GM12878 (cell line): ENCODE measurements at regions of chr10 and their contacts with region 1.

Region 1: DNA sequence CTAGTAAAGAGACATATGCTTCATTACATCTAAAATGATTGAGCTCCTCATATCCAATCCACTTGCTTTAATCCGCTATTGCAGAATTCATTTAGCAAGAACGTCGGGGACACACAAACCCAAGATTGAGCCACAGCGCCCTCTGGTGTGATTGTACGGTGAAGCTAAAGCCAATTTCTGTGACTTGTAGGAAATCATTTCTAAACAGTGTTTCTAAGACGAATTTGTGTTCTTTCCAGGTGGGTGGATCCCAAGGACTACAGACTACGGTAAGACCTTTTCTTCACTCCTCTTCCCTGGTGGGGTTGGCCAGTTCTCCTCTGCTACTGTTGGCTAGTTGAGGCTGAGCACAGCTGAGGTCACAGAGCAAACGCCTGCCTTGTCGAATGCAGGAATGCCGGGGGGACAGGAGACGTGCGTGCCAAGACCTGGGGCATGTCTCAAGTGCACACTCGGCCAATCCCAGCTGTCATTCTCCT is 5.2 kb downstream of the DMBT1 start:
- DNase-seq: peak; percentile 1
- ATAC-seq: peak; percentile 58
- H3K4me3 ChIP-seq: no peak overlapping the region
- H3K27ac ChIP-seq: no peak overlapping the region
- H3K4me1 ChIP-seq: no peaks in the 10 kb centered on the region
- H3K27me3 ChIP-seq: no peaks in the 10 kb centered on the region; a peak in 2 of 4 replicates
- CTCF ChIP-seq: peak; percentile 65 to 77 (median 71)
- EP300 ChIP-seq: no peak
- POLR2A ChIP-seq: no peak
- RAD21 ChIP-seq: peak; percentile 70

Region 2: GRCh38 chr10:122279725-122280141 is 286.0 kb before region 1 on chr10:
- CTCF ChIA-PET with region 1: interaction called, 13 read pairs
- POLR2A ChIA-PET with region 1: no interaction called
- RAD21 ChIA-PET with region 1: no interaction called
- SMC1A ChIA-PET with region 1: interaction called, 3 read pairs
- in situ Hi-C with region 1: no loop called
- intact Hi-C with region 1: no loop called
- DNase-seq: no peak
- ATAC-seq: peak; percentile 56
- H3K4me3 ChIP-seq: no peak overlapping the region
- H3K27ac ChIP-seq: no peak overlapping the region
- H3K4me1 ChIP-seq: no peaks in the 10 kb centered on the region
- H3K27me3 ChIP-seq: 0 out of 4 replicates have a peak, but pooled peaks cover 0 to 1% of the 10 kb centered on the region in 2 experiments
- CTCF ChIP-seq: peak; percentile 52 to 57 (median 55); a peak in 5 of 6 replicates
- EP300 ChIP-seq: no peak
- POLR2A ChIP-seq: no peak
- RAD21 ChIP-seq: peak; percentile 76

Region 3: GRCh38 chr10:122298598-122299301 is 267.0 kb before region 1 on chr10:
- CTCF ChIA-PET with region 1: interaction called, 31 read pairs
- POLR2A ChIA-PET with region 1: no interaction called
- RAD21 ChIA-PET with region 1: interaction called, 11 read pairs
- SMC1A ChIA-PET with region 1: interaction called, 8 read pairs
- in situ Hi-C with region 1: loop called (anchors 5 kb)
- intact Hi-C with region 1: loop called (anchors 2 kb)
- DNase-seq: no peak
- ATAC-seq: peak; percentile 95
- H3K4me3 ChIP-seq: no peak overlapping the region
- H3K27ac ChIP-seq: no peak overlapping the region
- H3K4me1 ChIP-seq: peaks cover 5% of the 10 kb centered on the region
- H3K27me3 ChIP-seq: no peaks in the 10 kb centered on the region; a peak in 1 of 4 replicates
- CTCF ChIP-seq: peak; percentile 87 to 88 (median 87)
- EP300 ChIP-seq: no peak
- POLR2A ChIP-seq: no peak
- RAD21 ChIP-seq: peak; percentile 93

Region 4: DNA sequence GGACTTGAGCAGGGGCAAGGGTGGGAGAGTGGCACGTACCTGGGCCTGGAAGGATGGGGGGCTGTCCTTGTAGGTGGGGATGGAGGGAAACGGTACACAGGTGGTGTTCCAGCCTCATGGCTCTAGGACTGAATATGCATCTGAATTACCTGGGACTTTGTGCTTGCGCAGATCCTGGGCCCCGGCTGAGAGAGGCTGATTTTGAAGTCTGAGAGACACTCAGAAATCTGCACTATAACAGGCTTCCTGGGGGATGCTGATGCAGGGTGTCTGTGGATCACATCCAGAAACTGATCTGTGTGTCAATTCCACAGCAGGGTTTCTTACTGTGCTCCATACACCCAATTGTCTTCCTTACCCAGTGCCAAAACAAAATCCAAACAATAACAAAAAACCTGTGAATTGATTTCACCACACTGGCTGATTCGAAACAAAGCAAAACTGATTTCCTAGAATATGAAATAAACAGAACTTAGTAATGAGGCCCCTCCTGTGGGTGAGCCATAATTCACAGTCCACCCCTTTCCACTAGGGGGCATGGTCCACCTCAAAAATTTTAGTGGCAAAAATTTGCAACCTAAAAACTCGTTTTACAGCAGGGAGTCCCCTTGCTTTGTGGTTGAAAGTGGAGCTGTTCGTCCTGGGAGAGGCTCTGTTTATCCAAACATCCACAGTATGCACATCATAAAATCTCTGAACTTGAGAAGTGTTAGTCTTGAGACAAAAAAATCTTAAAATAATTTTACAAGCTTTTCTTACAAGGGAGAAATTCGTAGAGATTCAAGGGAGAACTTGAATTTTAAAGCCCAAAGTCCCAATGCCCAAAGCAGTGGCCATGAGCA is 223.3 kb before region 1 on chr10:
- CTCF ChIA-PET with region 1: interaction called, 12 read pairs
- POLR2A ChIA-PET with region 1: no interaction called
- RAD21 ChIA-PET with region 1: interaction called, 3 read pairs
- SMC1A ChIA-PET with region 1: interaction called, 3 read pairs
- in situ Hi-C with region 1: no loop called
- intact Hi-C with region 1: loop called (anchors 1 kb)
- DNase-seq: no peak
- ATAC-seq: peak; percentile 74
- H3K4me3 ChIP-seq: no peak overlapping the region
- H3K27ac ChIP-seq: no peak overlapping the region
- H3K4me1 ChIP-seq: no peaks in the 10 kb centered on the region; the same call in 1 of the 2 replicates
- H3K27me3 ChIP-seq: peaks cover 0 to 6% of the 10 kb centered on the region in 2 experiments; a peak in 2 of 4 replicates
- CTCF ChIP-seq: peak; percentile 58 to 63 (median 62)
- EP300 ChIP-seq: no peak
- POLR2A ChIP-seq: no peak
- RAD21 ChIP-seq: peak; percentile 70

Region 5: GRCh38 chr10:122703439-122704118 is 137.8 kb after region 1 on chr10:
- CTCF ChIA-PET with region 1: no interaction called
- POLR2A ChIA-PET with region 1: no interaction called
- RAD21 ChIA-PET with region 1: no interaction called
- SMC1A ChIA-PET with region 1: no interaction called
- in situ Hi-C with region 1: no loop called
- intact Hi-C with region 1: loop called (anchors 5 kb)
- DNase-seq: no peak
- ATAC-seq: peak; percentile 98
- H3K4me3 ChIP-seq: no peak overlapping the region
- H3K27ac ChIP-seq: no peak overlapping the region
- H3K4me1 ChIP-seq: no peaks in the 10 kb centered on the region
- H3K27me3 ChIP-seq: no peaks in the 10 kb centered on the region; a peak in 1 of 4 replicates
- CTCF ChIP-seq: peak; percentile 82 to 89 (median 87)
- EP300 ChIP-seq: no peak
- POLR2A ChIP-seq: no peak
- RAD21 ChIP-seq: peak; percentile 83